Naive thymus-derived CD4-positive, alpha-beta T cell (primary cell): ENCODE measurements at regions of chr2 and their contacts with region 1.

Region 1: GRCh38 chr2:88627056-88627855 is at the start of gene EIF2AK3:
- DNase-seq: peak; percentile 85 to 99 (median 97)
- ATAC-seq: peak; percentile 89
- H3K4me3 ChIP-seq: peak within 1 kb of the TSS; percentile 93
- H3K4me3 Mint-ChIP-seq: peak within 1 kb of the TSS in 6 of 10 donors; percentile 94 to 98 (median 96)
- H3K27ac ChIP-seq: peak within 1 kb of the TSS; percentile 96
- H3K27ac Mint-ChIP-seq: peak within 1 kb of the TSS in 7 of 9 donors; percentile 86 to 98 (median 95)
- H3K4me1 ChIP-seq: peaks cover 12 to 18% of the 10 kb centered on the region in 2 donors
- H3K4me1 Mint-ChIP-seq: peaks cover 5 to 19% (median 13%) of the 10 kb centered on the region in 7 donors
- H3K27me3 ChIP-seq: no peaks in the 10 kb centered on the region
- H3K27me3 Mint-ChIP-seq: no peaks in the 10 kb centered on the region
- total RNA-seq, gene EIF2AK3: 26.1 to 36.5 (median 28.6) TPM

Region 2: GRCh38 chr2:88590998-88591613 is 36.1 kb before region 1 on chr2:
- CTCF ChIA-PET with region 1: no interaction called
- POLR2A ChIA-PET with region 1: interaction called, 4 read pairs
- intact Hi-C with region 1: loop called (anchors 1 to 5 kb)
- DNase-seq: peak in 8 of 9 donors; percentile 19 to 56 (median 38)
- ATAC-seq: peak; percentile 87
- H3K4me3 ChIP-seq: no peak overlapping the region
- H3K4me3 Mint-ChIP-seq: no peak overlapping the region
- H3K27ac ChIP-seq: no peak overlapping the region
- H3K27ac Mint-ChIP-seq: peak overlapping the region in 3 of 9 donors; percentile 20 to 68 (median 47)
- H3K4me1 ChIP-seq: no peaks in the 10 kb centered on the region
- H3K4me1 Mint-ChIP-seq: peaks cover 0 to 3% (median 0%) of the 10 kb centered on the region in 7 donors
- H3K27me3 ChIP-seq: no peaks in the 10 kb centered on the region
- H3K27me3 Mint-ChIP-seq: no peaks in the 10 kb centered on the region

Region 3: DNA sequence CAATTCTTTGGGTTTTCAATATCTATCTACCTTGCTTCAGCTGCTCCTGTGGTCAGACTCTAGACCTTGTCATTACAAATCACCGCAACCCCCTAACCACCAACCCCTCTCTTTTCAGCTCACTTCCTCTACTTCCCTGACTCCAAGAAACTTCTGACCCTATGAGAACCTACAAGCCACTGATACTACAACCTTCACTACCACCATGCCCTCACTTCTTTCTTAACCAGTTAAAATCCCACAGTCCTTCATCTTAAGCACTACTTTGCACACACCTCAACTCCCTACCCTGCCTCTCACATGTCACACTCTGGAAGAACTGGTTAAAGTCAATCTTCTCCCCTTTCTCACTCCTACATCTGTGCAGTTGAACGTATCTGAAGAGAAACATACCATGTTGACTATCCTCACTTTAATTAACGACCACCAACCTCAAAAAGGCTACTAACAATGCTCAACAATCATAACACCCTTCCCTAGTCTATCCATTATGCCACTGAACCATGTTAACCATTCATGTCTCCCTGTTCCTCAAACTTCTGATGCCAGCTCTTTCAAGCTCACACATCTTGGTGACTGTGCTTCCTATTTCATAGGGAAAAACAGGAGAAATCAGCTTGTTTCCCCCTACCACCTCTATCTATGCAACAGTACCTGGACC is 12.6 kb before region 1 on chr2:
- CTCF ChIA-PET with region 1: no interaction called
- POLR2A ChIA-PET with region 1: interaction called, 4 read pairs
- intact Hi-C with region 1: loop called in 1 of 2 experiments (anchors 1 kb)
- DNase-seq: no peak
- ATAC-seq: peak; percentile 10
- H3K4me3 ChIP-seq: no peak overlapping the region
- H3K4me3 Mint-ChIP-seq: no peak overlapping the region
- H3K27ac ChIP-seq: no peak overlapping the region
- H3K27ac Mint-ChIP-seq: no peak overlapping the region
- H3K4me1 ChIP-seq: no peaks in the 10 kb centered on the region
- H3K4me1 Mint-ChIP-seq: peaks cover 8 to 40% (median 27%) of the 10 kb centered on the region in 7 donors
- H3K27me3 ChIP-seq: no peaks in the 10 kb centered on the region
- H3K27me3 Mint-ChIP-seq: no peaks in the 10 kb centered on the region

Region 4: GRCh38 chr2:88669371-88670214 is 42.3 kb after region 1 on chr2:
- CTCF ChIA-PET with region 1: no interaction called
- POLR2A ChIA-PET with region 1: no interaction called
- intact Hi-C with region 1: loop called (anchors 1 kb)
- DNase-seq: peak in 2 of 9 donors; percentile 11 to 18
- ATAC-seq: peak; percentile 73
- H3K4me3 ChIP-seq: no peak overlapping the region
- H3K4me3 Mint-ChIP-seq: no peak overlapping the region
- H3K27ac ChIP-seq: no peak overlapping the region
- H3K27ac Mint-ChIP-seq: no peak overlapping the region
- H3K4me1 ChIP-seq: no peaks in the 10 kb centered on the region
- H3K4me1 Mint-ChIP-seq: peaks cover 0 to 6% (median 0%) of the 10 kb centered on the region in 7 donors
- H3K27me3 ChIP-seq: no peaks in the 10 kb centered on the region
- H3K27me3 Mint-ChIP-seq: peaks cover 0 to 5% (median 0%) of the 10 kb centered on the region in 5 donors

Region 5: DNA sequence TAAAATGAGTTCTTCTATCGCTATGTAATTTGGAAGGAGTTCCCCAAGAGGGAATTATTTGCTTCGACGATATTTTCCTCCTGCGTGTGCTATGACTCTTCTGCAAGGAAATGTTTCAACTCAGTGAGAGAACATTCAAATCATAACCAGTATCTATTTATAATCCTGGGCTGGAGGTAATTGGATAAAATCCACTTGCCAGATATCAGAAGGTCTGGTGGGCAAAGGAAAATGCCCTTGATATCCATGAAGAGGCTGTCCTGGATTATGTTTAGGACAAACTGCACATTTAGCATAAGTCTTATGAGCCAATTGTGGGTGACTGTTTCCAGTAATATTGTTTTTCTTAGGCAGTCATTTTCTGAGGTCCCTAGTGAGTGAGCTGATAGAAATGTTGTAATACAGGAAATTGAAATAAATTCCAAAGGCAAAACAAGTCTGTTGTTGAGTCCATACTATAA is 82.0 kb after region 1 on chr2:
- CTCF ChIA-PET with region 1: no interaction called
- POLR2A ChIA-PET with region 1: no interaction called
- intact Hi-C with region 1: no loop called
- DNase-seq: no peak
- ATAC-seq: no peak
- H3K4me3 ChIP-seq: no peak overlapping the region
- H3K4me3 Mint-ChIP-seq: no peak overlapping the region
- H3K27ac ChIP-seq: no peak overlapping the region
- H3K27ac Mint-ChIP-seq: no peak overlapping the region
- H3K4me1 ChIP-seq: no peaks in the 10 kb centered on the region
- H3K4me1 Mint-ChIP-seq: peaks cover 0 to 45% (median 18%) of the 10 kb centered on the region in 7 donors
- H3K27me3 ChIP-seq: no peaks in the 10 kb centered on the region
- H3K27me3 Mint-ChIP-seq: no peaks in the 10 kb centered on the region

Region 6: GRCh38 chr2:88753833-88754584 is 126.8 kb after region 1 on chr2:
- CTCF ChIA-PET with region 1: no interaction called
- POLR2A ChIA-PET with region 1: no interaction called
- intact Hi-C with region 1: loop called in 1 of 2 experiments (anchors 2 kb)
- DNase-seq: peak in 7 of 9 donors; percentile 61 to 85 (median 78)
- ATAC-seq: peak; percentile 79
- H3K4me3 ChIP-seq: peak overlapping the region; percentile 5
- H3K4me3 Mint-ChIP-seq: peak overlapping the region; percentile 33 to 87 (median 62)
- H3K27ac ChIP-seq: peak overlapping the region; percentile 84
- H3K27ac Mint-ChIP-seq: peak overlapping the region; percentile 90 to 100 (median 97)
- H3K4me1 ChIP-seq: peaks cover 0 to 60% of the 10 kb centered on the region in 2 donors
- H3K4me1 Mint-ChIP-seq: peaks cover 28 to 83% (median 70%) of the 10 kb centered on the region in 7 donors
- H3K27me3 ChIP-seq: no peaks in the 10 kb centered on the region
- H3K27me3 Mint-ChIP-seq: no peaks in the 10 kb centered on the region

Region 7: DNA sequence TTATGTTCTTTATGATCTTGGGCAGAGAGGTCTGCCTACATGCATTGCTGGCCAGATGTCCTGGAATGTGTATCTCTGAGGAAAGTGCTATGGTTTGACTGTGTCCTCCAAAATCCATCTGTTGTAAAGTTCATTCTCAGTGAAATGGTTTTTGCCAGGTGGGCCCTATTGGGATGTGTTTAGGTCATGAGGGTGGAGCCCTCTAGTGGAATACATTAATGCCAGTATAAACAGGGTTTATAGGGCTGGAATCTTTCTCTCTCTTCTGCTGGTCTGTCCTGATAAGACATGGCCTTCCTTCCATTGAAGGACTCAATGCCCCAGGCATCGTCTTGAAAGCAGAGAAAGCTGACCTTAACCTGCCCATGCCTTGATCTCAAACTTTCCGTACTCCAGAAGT is 322.8 kb after region 1 on chr2:
- CTCF ChIA-PET with region 1: no interaction called
- POLR2A ChIA-PET with region 1: no interaction called
- intact Hi-C with region 1: no loop called
- DNase-seq: peak in 2 of 9 donors; percentile 11 to 14
- ATAC-seq: no peak
- H3K4me3 ChIP-seq: no peak overlapping the region
- H3K4me3 Mint-ChIP-seq: no peak overlapping the region
- H3K27ac ChIP-seq: no peak overlapping the region
- H3K27ac Mint-ChIP-seq: no peak overlapping the region
- H3K4me1 ChIP-seq: no peaks in the 10 kb centered on the region
- H3K4me1 Mint-ChIP-seq: no peaks in the 10 kb centered on the region
- H3K27me3 ChIP-seq: no peaks in the 10 kb centered on the region
- H3K27me3 Mint-ChIP-seq: peaks cover 11 to 38% (median 23%) of the 10 kb centered on the region in 5 donors